OCI-LY7 (cell line): ENCODE measurements at regions of chr1 and their contacts with region 1.

Region 1: DNA sequence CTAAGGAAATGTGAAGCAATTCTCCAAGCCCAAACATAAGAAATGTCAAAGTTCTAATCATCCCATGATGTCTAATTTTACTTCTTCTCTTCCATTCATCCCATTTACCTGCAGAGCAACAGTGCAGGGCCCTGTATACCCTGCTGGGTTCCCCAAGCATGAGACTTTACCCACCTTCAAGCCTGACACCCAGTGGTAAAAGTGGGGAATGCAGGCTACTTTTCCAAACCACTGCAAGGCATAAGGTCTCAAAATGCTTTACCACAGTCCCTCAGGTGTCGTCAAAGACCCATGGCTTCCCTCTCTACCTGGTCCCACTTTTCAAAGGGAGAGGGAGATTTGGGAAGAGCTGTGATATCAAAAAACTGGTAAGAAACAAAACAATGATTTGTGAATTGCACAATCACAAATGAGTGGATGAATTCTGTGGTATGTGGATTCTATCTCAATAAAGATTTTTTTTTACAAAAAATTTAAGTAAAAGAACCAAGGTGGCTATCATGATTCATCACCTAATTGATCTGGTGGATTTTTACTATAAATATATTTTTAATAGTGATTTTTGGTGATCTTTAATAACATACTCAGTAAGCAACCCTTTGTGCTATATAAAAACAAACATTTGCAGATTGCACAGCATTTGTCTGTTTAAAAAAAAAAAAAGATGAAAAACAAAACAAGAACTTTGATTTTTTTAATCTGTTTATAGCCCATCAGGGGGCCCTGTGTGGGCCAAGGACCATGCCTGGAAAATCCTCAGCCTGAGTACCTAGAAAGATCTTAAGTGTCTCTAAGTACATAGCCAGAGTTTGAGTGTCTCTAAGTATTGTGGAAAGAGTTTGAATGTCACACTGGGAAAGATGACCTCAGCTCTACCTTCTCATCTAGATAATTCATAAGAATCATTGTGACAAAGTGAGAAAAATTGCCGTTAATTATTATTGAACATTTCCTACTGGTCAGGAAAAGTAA is 73.1 kb upstream of the GJB5 start:
- DNase-seq: peak; percentile 47
- H3K4me3 ChIP-seq: no peak overlapping the region
- H3K27ac ChIP-seq: no peak overlapping the region
- H3K4me1 ChIP-seq: no peaks in the 10 kb centered on the region
- CTCF ChIP-seq: peak; percentile 84

Region 2: GRCh38 chr1:34460193-34460592 is 221.6 kb before region 1 on chr1:
- CTCF ChIA-PET with region 1: no interaction called
- POLR2A ChIA-PET with region 1: no interaction called
- intact Hi-C with region 1: loop called (anchors 2 kb)
- DNase-seq: peak; percentile 46
- H3K4me3 ChIP-seq: no peak overlapping the region
- H3K27ac ChIP-seq: no peak overlapping the region
- H3K4me1 ChIP-seq: no peaks in the 10 kb centered on the region
- CTCF ChIP-seq: peak; percentile 78

Region 3: DNA sequence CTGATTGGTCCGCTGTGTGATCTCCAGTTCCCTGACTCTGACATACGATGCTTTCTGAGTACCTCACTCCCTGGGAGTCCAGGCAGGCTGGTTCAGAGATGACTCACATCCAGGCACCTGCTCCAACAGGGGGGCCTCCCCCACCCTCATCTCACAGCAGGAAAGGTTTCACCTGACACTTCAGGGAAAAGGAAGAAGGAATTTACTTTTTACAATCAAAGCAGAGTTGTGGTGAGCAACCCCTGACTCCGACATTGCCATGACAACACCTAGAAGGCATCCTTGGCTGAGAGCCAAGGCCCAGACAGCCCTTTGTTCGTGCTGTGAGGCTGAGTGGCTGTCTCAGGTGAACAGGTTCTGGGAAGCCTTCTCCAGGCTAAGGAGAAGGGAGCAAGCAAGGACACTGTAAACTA is 91.5 kb before region 1 on chr1:
- CTCF ChIA-PET with region 1: no interaction called
- POLR2A ChIA-PET with region 1: no interaction called
- intact Hi-C with region 1: no loop called
- DNase-seq: no peak
- H3K4me3 ChIP-seq: no peak overlapping the region
- H3K27ac ChIP-seq: no peak overlapping the region
- H3K4me1 ChIP-seq: no peaks in the 10 kb centered on the region
- CTCF ChIP-seq: no peak